Endothelial cell of umbilical vein (primary cell): ENCODE measurements at regions of chr5 and their contacts with region 1.

Region 1: DNA sequence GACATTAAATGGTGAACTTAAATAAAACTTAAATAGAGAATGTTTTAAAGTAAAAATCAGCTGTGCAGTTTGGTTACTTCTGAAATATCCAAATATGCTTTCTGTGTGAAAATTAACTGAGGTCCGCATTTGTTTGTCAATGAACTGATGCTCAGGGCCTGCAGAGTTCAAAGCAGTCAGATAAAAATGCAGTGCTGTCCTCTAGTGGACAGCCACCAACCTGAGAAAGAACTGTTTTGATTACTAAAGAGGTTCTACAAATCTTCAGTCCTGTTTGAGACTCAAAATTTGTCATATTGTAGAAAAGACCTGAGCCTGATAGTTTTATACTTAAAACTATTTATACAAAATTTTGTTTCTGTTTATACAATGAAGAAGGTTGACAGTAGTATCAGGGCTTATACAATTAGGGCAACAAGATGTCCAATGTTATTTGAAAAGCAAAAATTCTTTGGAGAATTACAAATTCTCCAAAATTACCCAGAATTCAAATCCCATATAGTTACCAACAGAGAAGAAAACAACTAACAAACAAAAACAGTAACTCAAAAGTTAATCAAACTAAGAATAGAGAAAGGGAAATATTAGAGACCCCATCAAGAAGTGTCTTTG is 232.3 kb upstream of the TBCA start:
- DNase-seq: peak; percentile 53
- H3K4me3 ChIP-seq: no peak overlapping the region
- H3K27ac ChIP-seq: no peak overlapping the region
- H3K4me1 ChIP-seq: no peaks in the 10 kb centered on the region
- H3K27me3 ChIP-seq: no peaks in the 10 kb centered on the region
- CTCF ChIP-seq: peak; percentile 61 to 62
- POLR2A ChIP-seq: no peak

Region 2: DNA sequence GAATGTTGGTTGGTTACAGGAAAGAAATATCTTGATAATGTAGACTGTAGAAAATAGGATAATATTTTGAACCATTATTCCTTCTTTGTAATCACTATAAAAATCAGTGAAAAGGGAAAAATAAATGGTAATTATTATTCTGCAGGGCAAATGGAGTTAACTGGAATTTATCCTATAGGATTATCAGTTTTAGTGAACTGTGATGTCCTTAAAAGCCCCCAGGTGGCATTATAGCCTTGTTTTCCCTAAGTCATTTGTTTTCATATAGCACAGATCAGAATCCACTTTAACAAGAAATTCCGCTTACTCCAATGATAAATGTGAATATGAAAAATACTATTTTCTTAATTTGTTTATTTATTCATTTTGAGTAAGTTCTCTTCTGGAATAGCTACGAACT is 490.2 kb before region 1 on chr5:
- CTCF ChIA-PET with region 1: interaction called, 3 read pairs
- POLR2A ChIA-PET with region 1: no interaction called
- dilution Hi-C with region 1: no loop called
- intact Hi-C with region 1: loop called (anchors 2 kb)
- DNase-seq: peak; percentile 2
- H3K4me3 ChIP-seq: no peak overlapping the region
- H3K27ac ChIP-seq: no peak overlapping the region
- H3K4me1 ChIP-seq: no peaks in the 10 kb centered on the region
- H3K27me3 ChIP-seq: peaks cover 0 to 5% of the 10 kb centered on the region in 2 experiments
- CTCF ChIP-seq: no peak
- POLR2A ChIP-seq: no peak

Region 3: DNA sequence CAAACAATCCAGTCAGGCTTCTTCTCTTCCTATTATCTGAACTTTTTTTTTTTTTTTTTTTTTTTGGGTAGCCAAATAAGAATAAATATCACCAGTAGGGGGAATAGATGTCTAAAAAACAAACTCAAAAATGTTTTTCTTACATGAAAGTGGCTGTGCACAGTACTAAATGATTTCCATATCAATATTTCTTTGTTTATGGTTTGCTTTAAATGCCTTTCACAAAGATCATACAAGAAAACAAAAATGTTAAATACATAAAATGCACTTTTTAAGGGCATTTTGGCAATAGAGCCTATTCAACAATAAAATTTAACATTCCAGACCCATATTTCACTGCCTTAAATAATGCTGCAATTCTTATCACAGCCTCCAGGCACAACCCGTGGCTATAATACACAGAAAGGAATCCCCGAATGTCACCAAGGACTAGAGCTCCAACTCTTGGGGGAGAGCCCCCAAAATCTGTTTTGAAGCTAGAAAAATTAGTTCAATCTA is 141.2 kb before region 1 on chr5:
- CTCF ChIA-PET with region 1: no interaction called
- POLR2A ChIA-PET with region 1: no interaction called
- dilution Hi-C with region 1: no loop called
- intact Hi-C with region 1: loop called (anchors 1 kb)
- DNase-seq: peak; percentile 40
- H3K4me3 ChIP-seq: no peak overlapping the region
- H3K27ac ChIP-seq: no peak overlapping the region
- H3K4me1 ChIP-seq: no peaks in the 10 kb centered on the region
- H3K27me3 ChIP-seq: peaks cover 8 to 20% of the 10 kb centered on the region in 2 experiments
- CTCF ChIP-seq: peak; percentile 4 to 9
- POLR2A ChIP-seq: no peak

Region 4: DNA sequence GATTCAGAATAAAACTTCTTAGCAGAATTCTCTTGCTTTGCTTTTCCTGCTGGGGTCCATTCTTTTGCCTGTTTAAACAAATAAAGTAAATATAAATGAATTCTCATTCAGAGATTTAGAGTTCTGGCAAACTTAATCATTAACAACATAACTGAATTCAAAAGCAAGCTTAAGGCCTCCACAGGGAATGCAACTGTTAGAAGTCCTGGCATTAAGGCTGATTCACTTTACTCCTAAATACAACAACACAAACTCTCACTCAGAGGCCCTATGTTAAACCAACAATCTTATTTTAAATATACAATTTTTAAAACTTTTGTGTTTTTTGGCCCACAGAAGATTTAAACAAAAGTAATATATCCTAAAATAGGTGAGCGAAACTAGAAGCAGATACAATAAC is 107.7 kb after region 1 on chr5:
- CTCF ChIA-PET with region 1: no interaction called
- POLR2A ChIA-PET with region 1: no interaction called
- dilution Hi-C with region 1: no loop called
- intact Hi-C with region 1: no loop called
- DNase-seq: no peak
- H3K4me3 ChIP-seq: no peak overlapping the region
- H3K27ac ChIP-seq: no peak overlapping the region
- H3K4me1 ChIP-seq: no peaks in the 10 kb centered on the region
- H3K27me3 ChIP-seq: no peaks in the 10 kb centered on the region
- CTCF ChIP-seq: no peak
- POLR2A ChIP-seq: no peak